Left cardiac atrium (tissue), 4 donors: ENCODE measurements at regions of chr16 and their contacts with region 1.

Region 1: DNA sequence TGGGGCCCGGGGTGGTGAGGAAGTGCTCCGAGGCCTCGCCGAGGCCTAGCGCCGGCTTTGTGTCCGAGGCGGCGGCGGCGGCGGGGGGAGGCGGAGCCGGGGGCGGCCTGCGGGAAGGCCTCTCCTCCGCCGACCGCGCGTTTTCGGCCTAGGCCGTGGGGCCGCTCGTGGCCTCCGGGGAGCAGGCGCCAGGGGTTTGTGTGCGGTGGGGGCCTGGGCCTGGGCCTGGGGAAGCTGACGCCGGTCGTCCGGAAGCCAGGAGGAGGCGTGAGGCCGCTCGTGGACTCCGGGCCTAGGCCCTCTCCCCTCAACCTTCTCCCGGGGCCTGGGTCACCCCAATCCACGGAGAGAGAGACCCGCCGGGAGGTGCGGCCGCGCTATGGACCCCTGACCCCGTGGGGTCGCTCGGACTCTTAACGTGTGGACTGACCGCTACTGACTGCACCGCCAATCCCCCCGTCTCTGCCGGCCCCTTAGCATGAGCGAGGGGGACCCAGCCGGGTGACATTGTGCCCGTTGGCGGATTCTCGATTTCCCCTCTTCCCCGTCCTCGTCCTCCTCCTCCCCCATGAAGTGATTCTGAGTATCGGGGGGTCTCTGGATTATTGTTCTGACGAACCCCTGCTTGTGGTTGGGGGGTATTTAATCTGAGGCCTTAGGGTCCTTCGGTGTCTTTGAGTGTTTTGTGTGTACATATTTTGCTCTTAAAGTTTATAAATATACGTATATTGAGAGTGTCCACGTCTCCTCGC is 660 bp downstream of the RBBP6 start:
- DNase-seq: peak; percentile 67
- ATAC-seq: peak; percentile 63 to 74

Region 2: GRCh38 chr16:24729985-24730815 is 190.2 kb after region 1 on chr16:
- intact Hi-C with region 1: loop called in 1 of 2 experiments (anchors 10 kb)
- DNase-seq: peak; percentile 33
- ATAC-seq: no peak